Mucosa of descending colon (tissue), 3 donors: ENCODE measurements at regions of chr6 and their contacts with region 1.

Region 1: DNA sequence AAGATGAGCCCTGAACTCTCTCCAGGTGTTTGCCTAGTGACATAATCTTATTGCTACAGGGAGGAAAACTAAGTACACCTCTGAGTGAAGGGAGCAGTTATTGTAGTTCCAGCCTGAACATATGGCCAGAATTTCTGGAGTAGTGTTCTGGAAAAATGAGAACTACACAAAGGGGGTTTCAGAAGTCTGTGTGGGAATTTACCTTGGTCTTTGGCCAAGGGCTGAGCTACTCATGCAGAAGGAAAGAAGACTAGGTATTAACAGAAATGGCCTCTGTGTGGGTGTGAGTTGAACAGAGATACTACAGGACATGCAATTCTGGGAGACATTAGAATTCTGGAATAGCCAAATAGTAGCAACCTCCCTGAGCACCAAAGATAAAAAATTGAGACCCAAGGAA is 1009.7 kb upstream of the GJE1 start:
- DNase-seq: no peak
- ATAC-seq: no peak
- H3K4me3 ChIP-seq: no peak overlapping the region
- H3K4me1 ChIP-seq: no peaks in the 10 kb centered on the region
- CTCF ChIP-seq: no peak

Region 2: GRCh38 chr6:140809694-140810101 is 313.4 kb before region 1 on chr6:
- intact Hi-C with region 1: no loop called
- DNase-seq: no peak
- ATAC-seq: no peak
- H3K4me3 ChIP-seq: no peak overlapping the region
- H3K4me1 ChIP-seq: no peaks in the 10 kb centered on the region
- CTCF ChIP-seq: no peak

Region 3: GRCh38 chr6:141088171-141088570 is 34.9 kb before region 1 on chr6:
- intact Hi-C with region 1: loop called in 1 of 2 experiments (anchors 1 kb)
- DNase-seq: no peak
- ATAC-seq: no peak
- H3K4me3 ChIP-seq: no peak overlapping the region
- H3K4me1 ChIP-seq: no peaks in the 10 kb centered on the region
- CTCF ChIP-seq: no peak